Naive thymus-derived CD4-positive, alpha-beta T cell (primary cell): ENCODE measurements at regions of chrX and their contacts with region 1.

Region 1: DNA sequence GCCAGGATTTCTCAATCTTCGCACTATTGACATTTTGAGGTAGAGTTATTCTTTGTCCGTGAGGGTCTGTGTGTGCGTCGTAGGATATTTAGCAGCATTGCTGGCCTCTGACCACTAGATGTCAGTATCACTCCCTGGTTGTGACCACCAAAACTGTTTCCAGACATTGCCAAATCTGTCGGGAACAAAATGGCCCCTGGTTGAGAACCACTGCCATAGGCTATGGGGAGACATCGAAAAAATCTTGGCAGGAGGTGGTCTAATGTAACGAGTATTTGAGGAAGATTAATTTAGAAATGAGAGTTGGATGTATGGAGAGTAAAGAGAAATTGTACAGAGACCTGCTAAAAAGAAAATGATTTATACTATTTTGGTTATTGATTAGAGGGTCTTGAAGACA is 108.4 kb downstream of the DOCK11 start:
- DNase-seq: peak in 8 of 9 donors; percentile 2 to 40 (median 25)
- ATAC-seq: peak; percentile 77
- H3K4me3 ChIP-seq: no peak overlapping the region
- H3K4me3 Mint-ChIP-seq: peak overlapping the region in 6 of 10 donors; percentile 3 to 50 (median 39)
- H3K27ac ChIP-seq: no peak overlapping the region
- H3K27ac Mint-ChIP-seq: peak overlapping the region in 8 of 9 donors; percentile 33 to 91 (median 76)
- H3K4me1 ChIP-seq: no peaks in the 10 kb centered on the region
- H3K4me1 Mint-ChIP-seq: peaks cover 8 to 29% (median 20%) of the 10 kb centered on the region in 7 donors
- H3K27me3 ChIP-seq: no peaks in the 10 kb centered on the region
- H3K27me3 Mint-ChIP-seq: no peaks in the 10 kb centered on the region

Region 2: GRCh38 chrX:118325453-118325852 is 278.5 kb before region 1 on chrX:
- CTCF ChIA-PET with region 1: no interaction called
- POLR2A ChIA-PET with region 1: no interaction called
- intact Hi-C with region 1: loop called in 1 of 2 experiments (anchors 1 kb)
- DNase-seq: no peak
- ATAC-seq: no peak
- H3K4me3 ChIP-seq: no peak overlapping the region
- H3K4me3 Mint-ChIP-seq: no peak overlapping the region
- H3K27ac ChIP-seq: no peak overlapping the region
- H3K27ac Mint-ChIP-seq: no peak overlapping the region
- H3K4me1 ChIP-seq: no peaks in the 10 kb centered on the region
- H3K4me1 Mint-ChIP-seq: peaks cover 0 to 2% (median 0%) of the 10 kb centered on the region in 7 donors
- H3K27me3 ChIP-seq: no peaks in the 10 kb centered on the region
- H3K27me3 Mint-ChIP-seq: peaks cover 0 to 3% (median 0%) of the 10 kb centered on the region in 5 donors

Region 3: DNA sequence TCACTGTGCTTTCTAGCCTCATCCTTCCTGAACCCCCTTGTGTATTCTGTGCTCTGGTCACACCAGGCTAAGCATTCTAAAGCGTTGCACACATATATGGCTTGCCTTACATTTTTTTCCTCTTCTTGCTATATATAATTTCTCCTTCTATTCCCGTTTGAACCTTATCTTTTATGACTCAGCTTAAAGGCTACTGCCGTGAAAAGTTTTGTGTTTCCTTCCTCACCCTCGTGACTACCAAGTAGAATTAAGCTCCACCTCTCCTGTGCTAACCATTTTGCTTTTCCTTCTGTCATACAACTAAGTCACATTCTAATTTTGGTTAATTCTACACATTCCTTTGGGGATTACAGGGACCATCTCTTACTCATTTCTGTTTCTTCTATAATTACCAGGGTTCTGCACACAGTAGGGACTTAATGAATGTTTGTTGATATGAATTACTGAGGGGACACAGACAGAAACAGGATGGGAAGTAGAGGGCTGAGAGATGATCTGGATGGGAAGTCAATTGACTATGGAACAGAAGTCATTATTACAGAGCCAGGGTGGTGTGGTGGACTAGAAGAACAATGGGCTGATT is 41.3 kb before region 1 on chrX:
- CTCF ChIA-PET with region 1: no interaction called
- POLR2A ChIA-PET with region 1: no interaction called
- intact Hi-C with region 1: loop called in 1 of 2 experiments (anchors 5 kb)
- DNase-seq: no peak
- ATAC-seq: no peak
- H3K4me3 ChIP-seq: no peak overlapping the region
- H3K4me3 Mint-ChIP-seq: peak overlapping the region in 2 of 10 donors; percentile 3 to 5
- H3K27ac ChIP-seq: peak overlapping the region; percentile 0
- H3K27ac Mint-ChIP-seq: peak overlapping the region; percentile 23 to 87 (median 68)
- H3K4me1 ChIP-seq: no peaks in the 10 kb centered on the region
- H3K4me1 Mint-ChIP-seq: peaks cover 2 to 38% (median 25%) of the 10 kb centered on the region in 7 donors
- H3K27me3 ChIP-seq: no peaks in the 10 kb centered on the region
- H3K27me3 Mint-ChIP-seq: no peaks in the 10 kb centered on the region